Right cardiac atrium (tissue), 5 donors: ENCODE measurements at regions of chr17 and their contacts with region 1.

Region 1: GRCh38 chr17:27601069-27601975 is 29.7 kb upstream of the LGALS9 start:
- DNase-seq: peak; percentile 75 to 91 (median 86)
- ATAC-seq: peak; percentile 33 to 70
- H3K4me3 ChIP-seq: no peak overlapping the region
- H3K27ac ChIP-seq: no peak overlapping the region
- H3K4me1 ChIP-seq: no peaks in the 10 kb centered on the region
- H3K27me3 ChIP-seq: no peaks in the 10 kb centered on the region

Region 2: DNA sequence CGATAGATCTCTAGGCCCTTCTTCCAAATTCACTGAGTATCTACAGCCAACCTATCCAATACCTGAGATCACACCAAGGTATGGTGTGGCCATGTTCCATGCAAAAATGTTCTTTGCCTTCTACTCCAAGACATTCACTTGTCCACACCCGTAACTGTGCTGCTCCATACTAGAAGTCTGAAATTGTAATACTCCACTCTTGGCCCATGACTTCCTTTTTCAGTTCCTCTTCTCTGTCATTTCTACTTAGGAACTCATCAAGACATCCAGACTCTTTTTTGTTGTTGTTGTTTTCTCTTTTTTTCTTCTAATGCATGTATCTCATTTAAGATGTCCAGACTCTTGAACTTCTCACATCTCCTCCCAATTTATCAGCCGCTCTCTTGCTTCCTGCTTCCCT is 187.5 kb before region 1 on chr17:
- intact Hi-C with region 1: no loop called
- DNase-seq: no peak
- ATAC-seq: no peak
- H3K4me3 ChIP-seq: no peak overlapping the region
- H3K27ac ChIP-seq: no peak overlapping the region
- H3K4me1 ChIP-seq: peaks cover 3% of the 10 kb centered on the region
- H3K27me3 ChIP-seq: no peaks in the 10 kb centered on the region

Region 3: DNA sequence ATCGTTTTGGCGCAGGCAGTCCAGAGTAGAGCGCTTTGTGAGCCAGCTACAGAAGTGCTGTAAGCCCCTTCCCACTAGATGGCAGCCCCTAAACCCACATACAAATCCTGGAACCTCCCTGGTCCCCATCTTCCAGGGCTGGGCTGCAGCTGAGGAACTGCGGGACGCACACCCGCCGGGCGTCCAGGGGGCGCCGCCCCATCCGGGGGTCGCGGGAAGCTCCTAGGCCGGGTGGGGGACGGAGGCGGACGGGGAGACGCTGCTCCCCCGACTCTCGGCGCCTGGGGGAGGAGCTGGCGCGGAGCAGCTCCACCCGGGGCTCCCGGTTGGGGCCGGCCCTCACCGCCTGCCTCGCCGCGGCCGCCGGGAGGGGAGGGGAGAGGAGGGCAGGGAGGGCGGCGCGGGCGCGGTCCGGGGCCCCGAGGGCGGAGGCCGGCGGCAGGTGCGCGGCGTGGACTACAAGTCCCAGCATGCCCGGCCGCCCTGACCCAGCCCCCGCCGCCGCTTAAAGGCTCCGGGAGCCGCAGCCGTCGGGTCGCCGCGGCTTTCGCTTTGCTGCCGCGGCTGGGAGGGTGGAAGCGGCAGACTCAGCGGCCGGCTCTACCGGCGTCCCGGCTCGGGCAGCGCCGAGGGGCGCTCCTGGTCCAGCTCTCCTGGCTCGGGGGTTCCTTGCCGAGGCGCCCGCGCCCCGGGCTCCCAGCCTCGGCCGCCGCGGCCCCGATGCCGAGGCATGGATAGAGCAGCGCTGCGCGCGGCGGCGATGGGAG is 145.2 kb before region 1 on chr17 and contains the start of gene KSR1:
- intact Hi-C with region 1: loop called (anchors 5 kb)
- DNase-seq: peak; percentile 82 to 93 (median 90)
- ATAC-seq: peak; percentile 94
- H3K4me3 ChIP-seq: peak within 1 kb of the TSS; percentile 92
- H3K27ac ChIP-seq: peak within 1 kb of the TSS; percentile 55
- H3K4me1 ChIP-seq: peaks cover 5% of the 10 kb centered on the region
- H3K27me3 ChIP-seq: no peaks in the 10 kb centered on the region
- total RNA-seq, gene KSR1: 13.1 to 22.7 (median 14.1) TPM

Region 4: DNA sequence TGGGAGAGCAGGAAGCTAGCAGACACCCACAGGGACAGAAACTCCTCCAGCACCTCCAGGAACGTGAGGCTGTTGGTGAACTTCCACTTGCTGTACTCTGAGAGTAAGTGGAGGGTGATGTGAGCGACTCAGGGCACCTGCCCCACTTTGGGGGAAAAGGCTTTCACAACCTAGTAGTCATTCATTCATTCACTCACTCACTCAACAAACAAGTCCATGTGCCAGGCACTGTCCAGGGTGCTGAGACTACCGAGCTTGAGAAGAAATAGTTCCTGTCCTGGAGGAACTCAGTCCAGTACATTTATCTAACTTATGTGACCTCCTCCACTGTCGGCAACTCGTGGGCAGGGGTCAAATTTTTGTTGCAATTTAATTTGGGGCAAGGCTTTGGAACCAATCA is 56.3 kb after region 1 on chr17:
- intact Hi-C with region 1: no loop called
- DNase-seq: no peak
- ATAC-seq: no peak
- H3K4me3 ChIP-seq: no peak overlapping the region
- H3K27ac ChIP-seq: no peak overlapping the region
- H3K4me1 ChIP-seq: no peaks in the 10 kb centered on the region
- H3K27me3 ChIP-seq: no peaks in the 10 kb centered on the region

Region 5: DNA sequence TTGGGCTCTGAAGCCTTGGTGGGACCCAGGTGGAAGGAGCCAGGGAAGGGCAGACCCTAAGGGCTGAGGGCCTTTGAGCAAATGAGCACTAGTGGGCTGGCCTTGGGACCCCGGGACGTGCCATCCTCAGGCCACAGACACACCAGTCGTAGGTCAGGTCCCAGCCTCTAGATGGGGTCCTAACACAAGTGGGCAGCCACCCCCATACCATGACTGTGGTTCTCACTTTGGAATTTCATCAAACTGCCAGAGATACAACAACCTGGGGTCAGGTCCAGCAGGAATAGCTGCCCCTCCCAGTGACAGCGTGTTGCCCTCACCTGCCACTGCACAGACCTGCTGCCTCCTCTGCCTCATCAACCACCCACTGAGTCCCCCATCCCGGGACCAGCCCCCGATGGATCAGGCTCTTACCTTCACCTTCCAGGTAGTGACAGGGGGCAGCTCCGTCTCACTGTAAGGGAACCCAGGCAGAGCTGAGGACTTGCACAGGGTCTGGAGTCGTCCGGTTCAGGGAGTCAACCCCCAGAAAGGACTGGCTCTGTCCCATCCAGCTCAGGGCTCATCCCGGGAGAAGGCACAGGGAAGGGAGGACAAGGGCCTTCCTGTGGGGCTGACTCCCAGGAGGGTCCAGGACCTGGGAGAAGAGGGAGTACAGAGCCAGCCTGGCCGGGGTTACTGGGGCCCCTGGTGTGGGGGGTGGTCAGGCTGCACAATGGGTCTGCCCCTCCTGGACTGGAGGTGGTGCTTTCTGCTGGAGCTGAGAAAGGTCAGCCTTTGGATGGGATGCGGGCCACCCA is 69.7 kb after region 1 on chr17:
- intact Hi-C with region 1: no loop called
- DNase-seq: no peak
- ATAC-seq: no peak
- H3K4me3 ChIP-seq: no peak overlapping the region
- H3K27ac ChIP-seq: no peak overlapping the region
- H3K4me1 ChIP-seq: no peaks in the 10 kb centered on the region
- H3K27me3 ChIP-seq: no peaks in the 10 kb centered on the region